B cell (primary cell): ENCODE measurements at regions of chr3 and their contacts with region 1.

Region 1: GRCh38 chr3:161220850-161221753 is at the start of gene NMD3:
- DNase-seq: peak; percentile 93
- ATAC-seq: peak; percentile 95
- H3K4me3 ChIP-seq: peak within 1 kb of the TSS; percentile 70 to 95 (median 92)
- H3K4me3 Mint-ChIP-seq: peak within 1 kb of the TSS; percentile 94
- H3K27ac ChIP-seq: peak within 1 kb of the TSS; percentile 64 to 81
- H3K27ac Mint-ChIP-seq: peak within 1 kb of the TSS; percentile 94
- H3K4me1 ChIP-seq: peaks cover 22% of the 10 kb centered on the region in 2 donors
- H3K4me1 Mint-ChIP-seq: peaks cover 27% of the 10 kb centered on the region
- H3K27me3 ChIP-seq: peaks cover 0 to 5% (median 2%) of the 10 kb centered on the region in 4 experiments
- H3K27me3 Mint-ChIP-seq: peaks cover 10% of the 10 kb centered on the region
- CTCF ChIP-seq: no peak
- total RNA-seq, gene NMD3: 36.1 and 38.0 TPM in 2 replicates

Region 2: DNA sequence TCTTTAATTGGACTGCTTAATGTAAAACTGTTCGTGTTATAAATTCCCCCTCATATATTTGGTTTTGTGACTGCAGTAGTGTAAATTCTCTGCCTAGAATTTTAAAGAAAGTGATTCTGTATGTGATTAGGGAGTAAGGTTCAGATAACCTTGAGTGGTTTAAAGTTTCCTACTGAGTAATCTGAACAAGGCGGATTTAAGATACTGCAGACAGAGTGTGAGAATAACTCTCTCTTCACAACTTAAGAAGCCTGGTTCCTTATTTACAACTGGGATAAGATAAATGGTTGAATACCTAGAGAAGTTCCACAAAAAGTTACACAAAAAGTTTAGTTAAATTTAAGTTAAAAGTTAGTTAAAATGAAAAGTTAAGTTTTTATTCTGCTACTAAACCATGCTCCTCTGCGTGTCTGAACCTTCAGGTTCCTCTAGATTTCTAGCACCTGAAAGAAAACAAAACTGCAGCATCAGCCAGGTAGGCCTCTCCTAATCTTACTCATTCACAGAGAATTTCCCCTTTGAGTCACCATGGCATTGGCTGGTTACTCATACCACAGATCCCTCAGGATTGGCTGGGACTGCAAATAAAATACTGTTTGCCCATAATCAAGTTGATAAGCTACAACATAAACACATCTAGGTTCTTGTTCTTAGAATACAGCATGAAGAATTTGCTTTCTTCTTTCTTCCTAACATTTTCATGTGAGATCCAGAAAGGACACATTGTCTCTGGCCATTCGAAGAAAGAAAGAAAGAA is 544.4 kb before region 1 on chr3 and contains the start of gene ARL14:
- CTCF ChIA-PET with region 1: no interaction called
- POLR2A ChIA-PET with region 1: no interaction called
- intact Hi-C with region 1: no loop called
- DNase-seq: no peak
- ATAC-seq: no peak
- H3K4me3 ChIP-seq: no peak within 1 kb of the TSS
- H3K4me3 Mint-ChIP-seq: no peak within 1 kb of the TSS
- H3K27ac ChIP-seq: no peak within 1 kb of the TSS
- H3K27ac Mint-ChIP-seq: no peak within 1 kb of the TSS
- H3K4me1 ChIP-seq: no peaks in the 10 kb centered on the region
- H3K4me1 Mint-ChIP-seq: no peaks in the 10 kb centered on the region
- H3K27me3 ChIP-seq: peaks cover 0 to 3% (median 0%) of the 10 kb centered on the region in 4 experiments
- H3K27me3 Mint-ChIP-seq: peaks cover 7% of the 10 kb centered on the region
- CTCF ChIP-seq: no peak
- total RNA-seq, gene ARL14: 0.32 and 0.89 TPM in 2 replicates

Region 3: DNA sequence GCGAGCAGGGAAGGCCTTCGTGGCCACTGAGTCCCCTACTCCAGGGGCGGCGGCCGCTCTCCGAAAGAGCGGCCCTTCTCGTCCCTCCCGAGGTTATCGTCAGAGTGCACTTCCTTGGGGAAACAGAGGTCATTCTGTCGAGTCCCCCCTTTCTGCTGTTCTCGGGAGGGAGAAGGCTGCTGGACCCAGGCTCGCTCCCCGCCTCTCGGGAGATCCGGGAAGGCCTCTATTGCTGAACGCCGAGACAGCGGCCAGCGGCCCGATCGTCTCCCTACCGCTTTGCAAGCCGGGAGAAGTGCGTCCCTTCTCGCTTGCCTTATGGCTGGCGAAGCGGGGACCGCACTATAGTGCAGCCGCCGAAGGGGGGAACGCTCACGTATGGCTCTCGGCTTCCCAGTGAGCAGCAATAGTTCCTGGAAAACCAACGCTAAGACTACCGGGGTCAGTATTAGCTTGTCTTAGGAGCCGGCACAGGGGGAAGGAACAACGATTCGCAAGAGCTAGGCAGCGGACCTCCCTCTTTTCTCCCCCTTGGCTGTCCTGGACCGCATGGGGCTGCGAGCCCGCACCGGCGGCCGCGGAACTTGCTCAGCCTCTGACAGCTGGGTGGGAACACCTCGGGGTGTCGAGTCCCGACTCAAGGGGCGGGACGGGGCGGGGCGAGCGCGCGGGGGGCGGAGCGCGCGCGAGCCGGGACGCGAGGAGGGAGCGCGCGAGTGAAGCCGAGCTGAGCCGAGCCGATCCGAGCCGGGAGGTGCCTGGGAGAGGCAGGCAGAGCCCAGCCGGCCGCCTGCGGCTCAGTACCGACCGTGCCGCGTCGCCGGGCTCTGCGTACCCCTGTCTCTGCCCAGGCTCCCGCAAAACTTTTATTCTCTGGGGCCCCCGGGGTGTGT is 466.0 kb before region 1 on chr3:
- CTCF ChIA-PET with region 1: no interaction called
- POLR2A ChIA-PET with region 1: no interaction called
- intact Hi-C with region 1: loop called (anchors 5 kb)
- DNase-seq: peak; percentile 93
- ATAC-seq: peak; percentile 81
- H3K4me3 ChIP-seq: peak overlapping the region; percentile 68 to 86 (median 81)
- H3K4me3 Mint-ChIP-seq: peak overlapping the region; percentile 98
- H3K27ac ChIP-seq: peak overlapping the region; percentile 72 to 82
- H3K27ac Mint-ChIP-seq: peak overlapping the region; percentile 95
- H3K4me1 ChIP-seq: peaks cover 25% of the 10 kb centered on the region in 2 donors
- H3K4me1 Mint-ChIP-seq: peaks cover 31% of the 10 kb centered on the region
- H3K27me3 ChIP-seq: peaks cover 0 to 11% (median 4%) of the 10 kb centered on the region in 4 experiments
- H3K27me3 Mint-ChIP-seq: peaks cover 21% of the 10 kb centered on the region
- CTCF ChIP-seq: no peak

Region 4: DNA sequence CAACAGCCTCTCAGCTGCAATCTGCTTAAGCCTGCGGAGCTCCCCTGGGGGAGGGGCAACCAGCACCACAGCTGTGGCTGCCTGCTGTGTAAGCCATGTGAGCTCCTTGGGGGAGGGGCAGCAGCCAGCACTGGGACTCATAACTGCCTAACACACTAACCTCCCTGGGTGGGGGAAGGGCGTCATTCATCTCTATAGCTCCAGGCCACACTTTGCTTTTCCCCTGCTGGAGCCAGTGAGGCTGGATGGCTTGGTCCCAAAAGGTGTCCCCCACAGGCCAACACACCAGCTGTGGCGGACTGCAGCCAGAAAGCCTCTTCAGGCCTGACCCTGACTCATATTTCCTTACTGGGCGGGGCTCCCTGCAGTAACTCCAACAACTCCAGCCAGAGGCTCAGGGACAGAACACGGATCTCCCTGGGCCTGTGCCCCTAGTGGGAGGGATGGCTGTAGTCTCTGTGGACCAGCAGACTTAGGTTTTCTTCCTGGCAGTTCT is 335.3 kb before region 1 on chr3:
- CTCF ChIA-PET with region 1: no interaction called
- POLR2A ChIA-PET with region 1: no interaction called
- intact Hi-C with region 1: no loop called
- DNase-seq: peak; percentile 5
- ATAC-seq: peak; percentile 21
- H3K4me3 ChIP-seq: no peak overlapping the region
- H3K4me3 Mint-ChIP-seq: no peak overlapping the region
- H3K27ac ChIP-seq: no peak overlapping the region
- H3K27ac Mint-ChIP-seq: no peak overlapping the region
- H3K4me1 ChIP-seq: peaks cover 0 to 8% of the 10 kb centered on the region in 2 donors
- H3K4me1 Mint-ChIP-seq: peaks cover 8% of the 10 kb centered on the region
- H3K27me3 ChIP-seq: no peaks in the 10 kb centered on the region
- H3K27me3 Mint-ChIP-seq: peaks cover 3% of the 10 kb centered on the region
- CTCF ChIP-seq: no peak

Region 5: GRCh38 chr3:161430307-161430706 is 209.2 kb after region 1 on chr3:
- CTCF ChIA-PET with region 1: no interaction called
- POLR2A ChIA-PET with region 1: no interaction called
- intact Hi-C with region 1: no loop called
- DNase-seq: no peak
- ATAC-seq: no peak
- H3K4me3 ChIP-seq: no peak overlapping the region
- H3K4me3 Mint-ChIP-seq: no peak overlapping the region
- H3K27ac ChIP-seq: no peak overlapping the region
- H3K27ac Mint-ChIP-seq: no peak overlapping the region
- H3K4me1 ChIP-seq: no peaks in the 10 kb centered on the region
- H3K4me1 Mint-ChIP-seq: no peaks in the 10 kb centered on the region
- H3K27me3 ChIP-seq: no peaks in the 10 kb centered on the region
- H3K27me3 Mint-ChIP-seq: peaks cover 15% of the 10 kb centered on the region
- CTCF ChIP-seq: no peak